ENCODE measurements at regions of chr3 and their contacts with region 1.

Region 1: GRCh38 chr3:25664810-25665314 is at the start of gene TOP2B:
- DNase-seq: peak; percentile 98
- H3K4me3 Mint-ChIP-seq: peak within 1 kb of the TSS; percentile 100
- H3K27ac Mint-ChIP-seq: peak within 1 kb of the TSS; percentile 99
- H3K4me1 Mint-ChIP-seq: peaks cover 42% of the 10 kb centered on the region
- H3K27me3 Mint-ChIP-seq: no peaks in the 10 kb centered on the region
- total RNA-seq, gene TOP2B: 137 and 147 TPM in 2 replicates

Region 2: DNA sequence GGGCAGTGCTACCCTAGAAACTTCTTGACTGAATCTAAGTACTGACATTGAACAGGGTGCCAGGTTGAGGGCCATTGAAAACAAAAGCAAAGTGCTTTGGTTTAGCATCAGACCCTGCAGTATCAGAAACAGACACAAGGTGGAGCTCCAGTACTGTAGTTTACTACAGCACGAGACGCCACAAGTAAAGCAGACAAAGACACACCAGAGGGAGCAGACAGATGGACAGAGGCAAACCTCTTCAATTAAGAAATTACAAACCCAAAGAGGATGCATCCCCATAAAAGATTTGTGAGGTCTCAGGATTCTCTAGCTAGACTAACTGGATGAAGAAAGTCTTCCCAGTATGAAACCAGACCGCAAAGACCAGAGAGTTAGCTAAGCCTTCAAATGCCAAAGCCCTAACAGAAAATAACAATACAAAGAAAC is 16.7 kb before region 1 on chr3:
- intact Hi-C with region 1: loop called (anchors 1 kb)
- DNase-seq: peak; percentile 95
- H3K4me3 Mint-ChIP-seq: no peak overlapping the region
- H3K27ac Mint-ChIP-seq: peak overlapping the region; percentile 53
- H3K4me1 Mint-ChIP-seq: peaks cover 34% of the 10 kb centered on the region
- H3K27me3 Mint-ChIP-seq: no peaks in the 10 kb centered on the region

Region 3: GRCh38 chr3:25725813-25726210 is 61.0 kb after region 1 on chr3:
- intact Hi-C with region 1: loop called (anchors 5 kb)
- DNase-seq: no peak
- H3K4me3 Mint-ChIP-seq: no peak overlapping the region
- H3K27ac Mint-ChIP-seq: no peak overlapping the region
- H3K4me1 Mint-ChIP-seq: peaks cover 2% of the 10 kb centered on the region
- H3K27me3 Mint-ChIP-seq: no peaks in the 10 kb centered on the region

Region 4: DNA sequence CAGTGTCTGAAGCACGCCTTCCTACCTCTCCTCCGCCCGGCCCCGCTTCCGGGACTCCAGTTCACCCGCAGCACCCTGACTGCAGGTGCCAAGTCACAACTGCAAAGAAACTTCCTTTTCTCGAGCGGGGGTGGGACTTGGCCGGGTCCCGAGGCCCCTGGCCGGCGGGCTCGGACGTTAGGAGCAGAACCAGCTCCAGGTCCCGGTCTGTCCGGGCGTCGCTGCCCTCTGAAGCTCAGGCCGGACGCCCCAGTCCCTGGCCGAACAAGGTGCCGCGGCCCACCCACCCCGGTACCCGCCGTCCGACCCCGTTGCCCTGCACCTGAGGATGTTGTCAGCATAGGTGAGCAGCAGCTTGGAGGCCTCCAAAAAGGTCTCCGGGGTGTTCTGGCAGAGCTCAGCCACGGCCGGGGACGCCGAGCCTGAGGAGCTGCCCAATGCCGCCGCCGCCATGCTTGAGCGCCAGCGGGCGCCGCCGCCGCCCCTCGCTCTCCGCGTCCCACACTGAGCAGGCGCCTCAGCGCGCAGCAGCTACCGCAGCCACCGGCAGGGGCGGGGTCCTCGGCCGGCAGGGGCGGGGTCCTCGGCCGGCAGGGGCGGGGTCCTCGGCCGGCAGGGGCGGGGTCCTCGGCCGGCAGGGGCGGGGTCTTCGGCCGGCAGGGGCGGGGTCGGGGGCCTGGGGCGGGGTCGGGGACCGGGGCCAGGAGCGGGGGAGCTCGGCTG is 118.2 kb after region 1 on chr3 and contains the start of gene NGLY1:
- intact Hi-C with region 1: loop called (anchors 1 kb)
- DNase-seq: peak; percentile 96
- H3K4me3 Mint-ChIP-seq: peak within 1 kb of the TSS; percentile 90
- H3K27ac Mint-ChIP-seq: peak within 1 kb of the TSS; percentile 89
- H3K4me1 Mint-ChIP-seq: peaks cover 48% of the 10 kb centered on the region
- H3K27me3 Mint-ChIP-seq: no peaks in the 10 kb centered on the region
- total RNA-seq, gene NGLY1: 65.0 and 70.7 TPM in 2 replicates

Region 5: DNA sequence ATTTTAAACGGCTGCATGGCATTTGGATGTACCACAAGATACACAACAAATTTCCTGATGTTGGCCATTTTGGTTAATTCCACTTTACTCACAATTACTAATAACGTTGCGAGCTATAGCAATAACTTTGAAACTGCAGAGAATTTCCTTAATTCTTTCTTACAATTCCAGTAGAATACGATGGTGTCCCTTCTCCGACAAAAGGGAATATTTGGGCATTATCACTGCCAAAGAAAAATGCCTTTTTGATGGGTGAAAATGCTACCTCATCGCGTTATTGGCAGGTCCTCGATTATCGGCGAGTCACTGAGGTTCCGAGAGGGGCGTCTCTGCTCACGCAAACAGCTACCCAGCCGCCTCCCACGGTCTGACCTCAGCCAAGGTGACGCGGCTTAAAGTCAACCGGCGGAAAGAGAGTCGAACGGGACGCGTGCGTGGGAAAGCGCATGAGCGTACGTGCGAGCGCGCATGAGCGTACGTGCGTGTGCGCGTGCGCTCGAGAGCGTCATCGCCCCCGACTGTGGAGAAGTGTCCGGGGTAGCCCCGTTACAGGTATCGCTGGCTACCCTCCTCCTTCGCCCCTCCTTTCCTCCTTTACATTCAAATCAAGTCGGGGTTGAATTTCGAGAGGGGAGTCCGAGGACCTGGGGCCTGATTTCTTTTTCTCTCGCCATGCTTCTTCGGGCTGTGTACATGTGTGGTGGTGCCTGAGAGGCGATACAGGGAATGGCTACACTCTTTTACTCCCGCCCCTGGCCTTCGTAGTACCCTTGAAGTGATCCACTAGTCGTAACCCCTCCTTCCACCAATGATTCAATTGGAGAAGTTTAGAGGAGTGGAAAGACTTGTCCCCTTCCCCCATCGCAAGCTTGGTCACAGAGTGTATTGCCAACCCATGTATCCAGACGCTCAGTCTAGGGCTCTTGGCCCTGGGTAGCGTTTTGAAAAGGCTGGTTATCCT is 125.0 kb after region 1 on chr3 and contains the start of gene OXSM:
- intact Hi-C with region 1: loop called (anchors 1 kb)
- DNase-seq: peak; percentile 97
- H3K4me3 Mint-ChIP-seq: peak within 1 kb of the TSS; percentile 90
- H3K27ac Mint-ChIP-seq: peak within 1 kb of the TSS; percentile 99
- H3K4me1 Mint-ChIP-seq: peaks cover 54% of the 10 kb centered on the region
- H3K27me3 Mint-ChIP-seq: peaks cover 2% of the 10 kb centered on the region
- total RNA-seq, gene OXSM: 13.3 and 16.3 TPM in 2 replicates

Region 6: DNA sequence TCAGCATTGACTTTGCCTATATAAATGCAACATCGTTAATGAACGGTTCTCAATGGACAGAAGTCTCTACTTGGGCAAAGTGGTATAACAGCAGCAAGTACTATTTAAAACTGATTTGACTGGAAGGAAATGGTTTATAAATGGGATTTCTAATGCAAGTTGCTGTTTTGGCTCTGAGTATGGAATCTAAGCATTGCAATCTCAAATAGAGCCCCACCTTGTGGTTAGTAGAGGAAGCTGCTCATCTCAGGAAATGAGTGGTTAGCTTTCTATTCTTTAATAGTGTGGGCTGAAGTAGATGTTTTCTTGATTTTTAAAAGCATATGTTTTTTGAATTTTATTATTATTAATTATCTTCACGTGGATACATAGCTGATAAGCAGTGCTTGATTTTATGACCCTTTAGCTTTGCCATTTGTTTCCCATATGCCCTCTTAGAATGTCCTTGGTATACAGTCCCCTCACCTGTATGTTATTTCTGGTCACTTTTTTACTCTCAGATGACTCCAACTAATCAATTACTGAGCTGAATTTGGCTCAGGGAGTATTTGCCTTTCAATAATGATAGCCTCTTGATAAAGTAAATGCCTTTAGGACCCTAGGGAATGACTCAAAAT is 192.1 kb after region 1 on chr3:
- intact Hi-C with region 1: loop called (anchors 5 kb)
- DNase-seq: peak; percentile 73
- H3K4me3 Mint-ChIP-seq: no peak overlapping the region
- H3K27ac Mint-ChIP-seq: no peak overlapping the region
- H3K4me1 Mint-ChIP-seq: peaks cover 2% of the 10 kb centered on the region
- H3K27me3 Mint-ChIP-seq: no peaks in the 10 kb centered on the region

Measured in activated CD4-positive, alpha-beta T cell treated with anti-CD3 and anti-CD28 coated beads, Interleukin-2, amount 10 ng/mL, durations not matched to agents 24 days and 14 days (primary cell).